ENCODE measurements at regions of chr9 and their contacts with region 1.

Region 1: GRCh38 chr9:121121582-121122087 is 46.9 kb downstream of the CNTRL start:
- DNase-seq: peak; percentile 96
- H3K4me3 Mint-ChIP-seq: peak overlapping the region; percentile 75
- H3K27ac Mint-ChIP-seq: peak overlapping the region; percentile 78
- H3K4me1 Mint-ChIP-seq: peaks cover 50% of the 10 kb centered on the region
- H3K27me3 Mint-ChIP-seq: no peaks in the 10 kb centered on the region

Region 2: DNA sequence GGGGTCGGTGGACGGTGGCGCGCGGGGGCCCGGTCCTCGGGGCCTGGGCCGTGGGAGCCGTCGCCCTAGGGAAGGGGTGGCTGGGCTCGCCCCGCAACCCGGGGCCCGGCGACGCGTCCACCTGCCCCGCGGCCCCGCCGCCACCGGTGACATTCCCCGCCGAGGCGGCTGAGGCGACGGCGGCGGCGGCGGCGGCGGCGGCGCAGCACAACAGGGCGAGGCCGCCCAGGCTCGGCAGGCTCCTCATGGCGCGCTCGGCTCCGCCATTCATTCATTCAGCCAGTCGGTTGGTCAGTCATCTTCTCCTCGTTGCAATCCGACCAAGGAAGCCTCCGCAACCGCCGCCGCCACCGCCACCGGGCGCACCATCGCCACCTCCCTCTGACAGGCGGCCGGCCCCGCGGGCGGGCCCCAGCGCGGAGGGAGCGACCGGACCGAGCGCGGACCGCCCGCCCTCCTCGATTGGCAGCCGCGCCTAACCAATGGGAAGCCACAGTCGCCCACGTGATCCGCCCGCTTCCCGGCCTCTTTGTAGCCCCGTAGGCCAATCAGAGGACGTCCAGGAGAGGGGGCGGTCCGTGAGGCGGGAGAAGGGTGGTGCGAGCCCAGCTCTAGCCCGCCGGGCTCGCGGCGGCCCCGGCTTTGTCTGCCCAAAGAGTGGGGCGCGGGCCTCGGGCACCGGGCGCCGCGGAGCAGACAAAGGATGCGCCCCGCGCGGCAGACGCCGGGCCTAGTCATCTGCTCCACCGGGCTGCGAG is 407.4 kb before region 1 on chr9 and contains the start of gene MEGF9:
- intact Hi-C with region 1: loop called (anchors 1 kb)
- DNase-seq: peak; percentile 96
- H3K4me3 Mint-ChIP-seq: peak within 1 kb of the TSS; percentile 92
- H3K27ac Mint-ChIP-seq: peak within 1 kb of the TSS; percentile 82
- H3K4me1 Mint-ChIP-seq: peaks cover 41% of the 10 kb centered on the region
- H3K27me3 Mint-ChIP-seq: no peaks in the 10 kb centered on the region
- total RNA-seq, gene MEGF9: 5.4 and 5.9 TPM in 2 replicates

Region 3: GRCh38 chr9:120928483-120929228 is 193.0 kb before region 1 on chr9:
- intact Hi-C with region 1: loop called (anchors 1 kb)
- DNase-seq: peak; percentile 82
- H3K4me3 Mint-ChIP-seq: peak overlapping the region; percentile 89
- H3K27ac Mint-ChIP-seq: peak overlapping the region; percentile 96
- H3K4me1 Mint-ChIP-seq: peaks cover 87% of the 10 kb centered on the region
- H3K27me3 Mint-ChIP-seq: no peaks in the 10 kb centered on the region

Region 4: GRCh38 chr9:121107041-121107440 is 14.6 kb before region 1 on chr9:
- intact Hi-C with region 1: no loop called
- DNase-seq: no peak
- H3K4me3 Mint-ChIP-seq: no peak overlapping the region
- H3K27ac Mint-ChIP-seq: no peak overlapping the region
- H3K4me1 Mint-ChIP-seq: peaks cover 22% of the 10 kb centered on the region
- H3K27me3 Mint-ChIP-seq: no peaks in the 10 kb centered on the region

Region 5: GRCh38 chr9:121133149-121133816 is 11.6 kb after region 1 on chr9:
- intact Hi-C with region 1: loop called (anchors 1 kb)
- DNase-seq: peak; percentile 68
- H3K4me3 Mint-ChIP-seq: peak overlapping the region; percentile 32
- H3K27ac Mint-ChIP-seq: peak overlapping the region; percentile 64
- H3K4me1 Mint-ChIP-seq: peaks cover 78% of the 10 kb centered on the region
- H3K27me3 Mint-ChIP-seq: no peaks in the 10 kb centered on the region

Region 6: GRCh38 chr9:121201738-121202533 is 80.3 kb after region 1 on chr9 and contains the start of gene RAB14:
- intact Hi-C with region 1: loop called (anchors 1 kb)
- DNase-seq: peak; percentile 100
- H3K4me3 Mint-ChIP-seq: peak within 1 kb of the TSS; percentile 96
- H3K27ac Mint-ChIP-seq: peak within 1 kb of the TSS; percentile 92
- H3K4me1 Mint-ChIP-seq: peaks cover 61% of the 10 kb centered on the region
- H3K27me3 Mint-ChIP-seq: no peaks in the 10 kb centered on the region
- total RNA-seq, gene RAB14: 64.8 and 69.3 TPM in 2 replicates

Measured in activated T-helper 1 cell treated with anti-CD3 and anti-CD28 coated beads, Interleukin-12 subunit alpha, Interleukin-12 subunit beta, Interleukin-2, Interleukin-4 antibody, amounts not matched to agents 30 ng/mL and 10 ng/mL and 1 ng/mL, durations not matched to agents 14 hours and 24 hours and 36 hours (primary cell).